Naive thymus-derived CD4-positive, alpha-beta T cell (primary cell): ENCODE measurements at regions of chr11 and their contacts with region 1.

Region 1: GRCh38 chr11:120235024-120235861 is 4.7 kb upstream of the POU2F3 start:
- DNase-seq: peak; percentile 11 to 71 (median 34)
- ATAC-seq: peak; percentile 71
- H3K4me3 ChIP-seq: no peak overlapping the region
- H3K4me3 Mint-ChIP-seq: no peak overlapping the region
- H3K27ac ChIP-seq: no peak overlapping the region
- H3K27ac Mint-ChIP-seq: no peak overlapping the region
- H3K4me1 ChIP-seq: no peaks in the 10 kb centered on the region
- H3K4me1 Mint-ChIP-seq: peaks cover 0 to 6% (median 0%) of the 10 kb centered on the region in 7 donors
- H3K27me3 ChIP-seq: peaks cover 0 to 3% of the 10 kb centered on the region in 2 donors
- H3K27me3 Mint-ChIP-seq: peaks cover 33 to 61% (median 41%) of the 10 kb centered on the region in 5 donors

Region 2: GRCh38 chr11:120285256-120285655 is 50.0 kb after region 1 on chr11:
- CTCF ChIA-PET with region 1: no interaction called
- POLR2A ChIA-PET with region 1: no interaction called
- intact Hi-C with region 1: no loop called
- DNase-seq: no peak
- ATAC-seq: no peak
- H3K4me3 ChIP-seq: no peak overlapping the region
- H3K4me3 Mint-ChIP-seq: no peak overlapping the region
- H3K27ac ChIP-seq: no peak overlapping the region
- H3K27ac Mint-ChIP-seq: no peak overlapping the region
- H3K4me1 ChIP-seq: no peaks in the 10 kb centered on the region
- H3K4me1 Mint-ChIP-seq: peaks cover 0 to 3% (median 0%) of the 10 kb centered on the region in 7 donors
- H3K27me3 ChIP-seq: no peaks in the 10 kb centered on the region
- H3K27me3 Mint-ChIP-seq: peaks cover 0 to 41% (median 21%) of the 10 kb centered on the region in 5 donors

Region 3: GRCh38 chr11:120303004-120303637 is 67.9 kb after region 1 on chr11:
- CTCF ChIA-PET with region 1: no interaction called
- POLR2A ChIA-PET with region 1: no interaction called
- intact Hi-C with region 1: loop called (anchors 1 to 2 kb)
- DNase-seq: peak in 8 of 9 donors; percentile 14 to 69 (median 36)
- ATAC-seq: peak; percentile 82
- H3K4me3 ChIP-seq: no peak overlapping the region
- H3K4me3 Mint-ChIP-seq: no peak overlapping the region
- H3K27ac ChIP-seq: no peak overlapping the region
- H3K27ac Mint-ChIP-seq: no peak overlapping the region
- H3K4me1 ChIP-seq: no peaks in the 10 kb centered on the region
- H3K4me1 Mint-ChIP-seq: peaks cover 0 to 1% (median 0%) of the 10 kb centered on the region in 7 donors
- H3K27me3 ChIP-seq: no peaks in the 10 kb centered on the region
- H3K27me3 Mint-ChIP-seq: peaks cover 12 to 38% (median 30%) of the 10 kb centered on the region in 5 donors